ENCODE measurements at regions of chr5 and their contacts with region 1.

Region 1: GRCh38 chr5:174793684-174794328 is 69.4 kb downstream of the MSX2 start:
- DNase-seq: no peak
- H3K4me3 ChIP-seq: no peak overlapping the region
- H3K27ac ChIP-seq: no peak overlapping the region
- H3K27me3 ChIP-seq: peaks cover 9% of the 10 kb centered on the region
- CTCF ChIP-seq: peak; percentile 90

Region 2: GRCh38 chr5:174402221-174402815 is 391.5 kb before region 1 on chr5:
- CTCF ChIA-PET with region 1: interaction called, 11 read pairs
- POLR2A ChIA-PET with region 1: interaction called, 6 read pairs
- DNase-seq: no peak
- H3K4me3 ChIP-seq: no peak overlapping the region
- H3K27ac ChIP-seq: no peak overlapping the region
- H3K27me3 ChIP-seq: peaks cover 19% of the 10 kb centered on the region
- CTCF ChIP-seq: peak; percentile 21; the same call in 1 of the 2 replicates

Region 3: GRCh38 chr5:174409070-174409469 is 384.7 kb before region 1 on chr5:
- CTCF ChIA-PET with region 1: interaction called, 13 read pairs
- POLR2A ChIA-PET with region 1: no interaction called
- DNase-seq: no peak
- H3K4me3 ChIP-seq: no peak overlapping the region
- H3K27ac ChIP-seq: no peak overlapping the region
- H3K27me3 ChIP-seq: peaks cover 2% of the 10 kb centered on the region
- CTCF ChIP-seq: no peak

Region 4: DNA sequence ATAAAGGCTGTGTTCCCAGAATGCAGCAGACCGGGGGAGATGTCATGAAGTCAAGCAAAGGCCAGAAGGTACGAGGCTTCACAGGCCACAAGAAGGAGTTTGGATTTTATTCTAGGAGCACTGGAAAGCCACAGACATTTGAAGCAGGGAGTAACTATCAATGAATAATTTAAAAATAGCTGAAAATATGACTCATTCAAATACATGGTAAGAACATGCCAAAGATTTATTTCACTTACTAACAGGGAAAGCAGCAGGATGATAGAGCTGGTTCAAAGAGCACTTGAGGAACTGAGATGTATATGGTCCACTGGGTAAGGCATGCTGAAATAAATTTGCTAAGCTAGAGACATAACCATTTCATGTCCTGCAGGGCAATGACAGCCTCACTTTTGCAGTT is 16.2 kb before region 1 on chr5:
- CTCF ChIA-PET with region 1: interaction called, 16 read pairs
- POLR2A ChIA-PET with region 1: no interaction called
- DNase-seq: no peak
- H3K4me3 ChIP-seq: no peak overlapping the region
- H3K27ac ChIP-seq: no peak overlapping the region
- H3K27me3 ChIP-seq: no peaks in the 10 kb centered on the region
- CTCF ChIP-seq: no peak

Region 5: GRCh38 chr5:174849426-174849825 is 55.6 kb after region 1 on chr5:
- CTCF ChIA-PET with region 1: no interaction called
- POLR2A ChIA-PET with region 1: no interaction called
- DNase-seq: no peak
- H3K4me3 ChIP-seq: no peak overlapping the region
- H3K27ac ChIP-seq: no peak overlapping the region
- H3K27me3 ChIP-seq: no peaks in the 10 kb centered on the region
- CTCF ChIP-seq: no peak